SK-N-SH (cell line): ENCODE measurements at regions of chr3 and their contacts with region 1.

Region 1: DNA sequence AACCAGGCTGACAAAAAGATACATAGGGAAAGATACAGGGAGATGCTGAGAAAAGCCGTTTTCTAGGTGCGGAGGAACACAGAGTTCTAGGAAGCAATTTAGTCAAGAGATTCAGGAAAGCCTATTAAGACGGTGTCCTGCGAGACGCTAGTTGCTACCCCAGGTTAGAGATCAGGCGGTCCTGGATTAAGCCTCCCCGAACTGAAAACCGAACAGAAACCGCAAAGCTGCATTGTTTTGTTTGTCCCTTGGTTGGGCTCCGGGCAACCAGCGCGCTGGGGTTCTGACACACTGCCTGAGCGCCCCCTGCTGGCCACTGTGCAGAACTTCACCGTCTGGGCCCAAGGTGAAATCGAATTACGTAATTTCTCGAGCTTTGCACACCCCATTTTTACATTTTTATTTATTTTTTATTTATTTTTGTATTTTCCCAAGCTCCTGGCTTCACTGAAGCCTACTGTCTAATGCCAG is 37.3 kb upstream of the NDUFB4 start:
- DNase-seq: peak; percentile 78
- H3K4me3 ChIP-seq: peak overlapping the region; percentile 59 to 61
- H3K27ac ChIP-seq: peak overlapping the region; percentile 81 to 94
- H3K4me1 ChIP-seq: peaks cover 20 to 21% of the 10 kb centered on the region in 2 experiments
- H3K27me3 ChIP-seq: no peaks in the 10 kb centered on the region
- CTCF ChIP-seq: peak; percentile 97
- EP300 ChIP-seq: no peak
- RAD21 ChIP-seq: peak; percentile 91

Region 2: DNA sequence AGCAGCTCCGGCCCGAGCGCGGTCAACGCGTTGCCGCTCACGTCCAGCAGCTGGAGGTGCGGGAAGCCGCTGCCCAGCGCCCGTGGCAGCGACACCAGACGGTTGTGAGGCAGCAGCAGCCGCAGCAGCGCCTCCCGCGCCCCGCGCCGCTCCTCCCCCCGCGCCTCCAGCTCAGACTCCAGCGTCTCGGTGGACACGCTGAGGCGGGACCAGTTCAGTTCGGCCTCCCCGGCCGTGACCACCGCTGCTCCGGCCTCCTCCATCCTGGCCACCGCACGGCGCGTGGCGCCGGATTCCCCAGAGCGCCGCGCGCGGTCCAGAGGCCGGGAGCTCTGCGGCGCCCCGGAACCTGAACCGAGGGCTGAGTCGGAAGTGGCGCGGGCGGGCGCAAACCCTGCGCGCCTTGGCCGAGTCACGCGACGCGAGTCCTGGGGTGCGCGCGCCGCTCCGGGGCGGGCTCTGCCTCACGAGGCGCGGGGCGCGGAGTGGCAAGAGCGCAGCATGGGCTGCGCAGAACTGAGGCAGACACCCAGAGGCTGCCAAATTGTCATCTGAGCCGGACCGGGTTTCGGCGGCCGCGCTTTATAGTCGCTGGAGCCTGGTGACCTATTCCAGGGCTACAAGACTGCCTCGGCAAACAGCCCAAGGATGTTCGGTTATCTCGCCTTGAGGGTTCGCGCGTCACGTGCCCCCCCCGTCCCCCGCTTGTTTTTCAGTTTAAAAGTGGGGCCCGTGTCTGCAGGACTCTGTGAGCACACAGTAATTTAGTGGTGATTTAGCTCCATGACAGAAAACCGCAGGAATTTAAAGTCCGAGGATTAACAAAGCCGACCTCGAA is 209.6 kb before region 1 on chr3 and contains the start of gene LRRC58:
- CTCF ChIA-PET with region 1: interaction called, 10 read pairs
- POLR2A ChIA-PET with region 1: no interaction called
- DNase-seq: peak; percentile 95
- H3K4me3 ChIP-seq: peak within 1 kb of the TSS; percentile 90 to 94
- H3K27ac ChIP-seq: peak within 1 kb of the TSS; percentile 87 to 96
- H3K4me1 ChIP-seq: peaks cover 6 to 12% of the 10 kb centered on the region in 2 experiments; a peak in 3 of 4 replicates
- H3K27me3 ChIP-seq: no peaks in the 10 kb centered on the region
- CTCF ChIP-seq: peak; percentile 31
- EP300 ChIP-seq: peak; percentile 19 to 39; a peak in 2 of 4 replicates
- RAD21 ChIP-seq: no peak; the same call in 1 of the 2 replicates
- polyA plus RNA-seq, gene LRRC58: 5.8 and 8.1 TPM in 2 replicates

Region 3: DNA sequence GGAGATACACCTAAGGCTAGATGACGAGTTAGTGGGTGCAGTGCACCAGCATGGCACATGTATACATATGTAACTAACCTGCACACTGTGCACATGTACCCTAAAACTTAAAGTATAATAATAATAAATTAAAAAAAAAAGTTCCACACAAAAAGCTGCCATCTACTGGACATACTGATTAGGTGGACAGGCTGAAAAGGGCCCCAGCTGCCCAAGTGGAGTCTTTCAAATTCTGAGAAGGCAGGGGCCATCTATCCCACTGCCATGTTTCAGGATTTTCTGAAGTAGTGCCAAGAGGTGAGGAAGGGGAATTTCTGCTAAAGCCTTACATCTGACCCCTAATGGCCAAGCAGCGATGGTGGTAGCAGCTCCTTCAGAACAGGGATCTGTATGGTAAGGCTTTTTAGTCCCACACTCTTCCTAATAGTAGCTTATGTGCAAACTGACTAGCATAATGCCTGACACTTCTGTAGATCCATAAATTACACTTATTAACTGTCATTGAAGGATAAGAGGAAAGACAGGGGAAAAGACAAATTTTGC is 115.8 kb before region 1 on chr3:
- CTCF ChIA-PET with region 1: interaction called, 10 read pairs
- POLR2A ChIA-PET with region 1: no interaction called
- DNase-seq: no peak
- H3K4me3 ChIP-seq: no peak overlapping the region
- H3K27ac ChIP-seq: peak overlapping the region; percentile 13 to 43; a peak in 2 of 4 replicates
- H3K4me1 ChIP-seq: peaks cover 22 to 55% of the 10 kb centered on the region in 2 experiments
- H3K27me3 ChIP-seq: no peaks in the 10 kb centered on the region
- CTCF ChIP-seq: peak; percentile 57
- EP300 ChIP-seq: no peak
- RAD21 ChIP-seq: no peak

Region 4: DNA sequence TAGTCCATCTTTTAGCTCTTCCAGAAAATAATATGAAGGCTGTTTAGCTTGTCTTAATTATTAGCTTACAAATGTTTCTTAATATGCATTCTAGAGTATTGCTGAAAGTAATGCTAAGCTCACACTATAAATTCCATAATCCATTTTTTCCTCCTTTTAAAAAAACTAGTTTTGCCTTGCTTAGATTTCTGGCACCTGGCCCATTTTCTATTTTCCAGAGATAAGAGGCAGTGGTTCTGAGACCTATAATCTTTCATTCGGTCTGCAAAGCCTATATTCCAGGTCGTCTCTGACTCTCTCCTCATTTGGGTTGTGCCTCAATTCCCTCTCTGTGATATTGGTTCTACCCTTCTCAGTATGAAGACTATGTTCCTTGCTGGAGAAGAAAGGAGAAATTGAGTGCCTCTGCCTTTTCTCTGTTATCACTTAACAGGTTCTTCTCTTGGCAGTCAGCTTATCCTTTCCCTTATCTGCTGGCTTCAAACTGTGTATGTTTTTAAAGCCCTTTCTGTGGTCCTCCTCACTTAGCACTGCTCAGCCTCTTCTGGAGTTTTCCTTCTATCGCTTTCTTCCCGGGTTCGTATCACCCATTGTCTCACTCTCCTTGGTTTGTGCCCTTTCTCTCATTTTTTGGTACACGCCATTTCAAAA is 42.8 kb before region 1 on chr3:
- CTCF ChIA-PET with region 1: interaction called, 12 read pairs
- POLR2A ChIA-PET with region 1: no interaction called
- DNase-seq: peak; percentile 12
- H3K4me3 ChIP-seq: no peak overlapping the region
- H3K27ac ChIP-seq: no peak overlapping the region
- H3K4me1 ChIP-seq: peaks cover 0 to 5% of the 10 kb centered on the region in 2 experiments; a peak in 2 of 4 replicates
- H3K27me3 ChIP-seq: no peaks in the 10 kb centered on the region
- CTCF ChIP-seq: no peak
- EP300 ChIP-seq: no peak
- RAD21 ChIP-seq: no peak

Region 5: DNA sequence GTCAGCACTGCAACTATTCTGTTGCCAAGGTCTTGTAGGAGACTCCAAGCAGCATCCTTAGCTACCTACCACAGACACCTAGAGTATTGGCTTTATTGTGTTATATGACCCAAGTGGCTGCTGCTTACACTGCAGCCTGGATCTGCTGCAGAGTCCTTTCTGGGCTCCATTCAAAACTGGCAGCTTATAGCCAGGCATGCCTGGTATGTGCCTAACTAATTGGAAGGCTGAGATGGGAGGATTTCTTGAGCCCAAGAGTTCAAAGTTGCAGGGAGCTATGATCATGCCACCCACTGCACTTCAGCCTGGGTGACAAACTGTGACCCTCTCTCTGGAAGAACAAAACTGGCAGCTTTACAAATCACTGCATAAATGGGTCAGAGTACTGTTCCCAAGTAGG is 46.0 kb after region 1 on chr3:
- CTCF ChIA-PET with region 1: interaction called, 16 read pairs
- POLR2A ChIA-PET with region 1: no interaction called
- DNase-seq: no peak
- H3K4me3 ChIP-seq: no peak overlapping the region
- H3K27ac ChIP-seq: peak overlapping the region in 1 of 2 experiments; percentile 25; a peak in 1 of 4 replicates
- H3K4me1 ChIP-seq: peaks cover 1 to 32% of the 10 kb centered on the region in 2 experiments; a peak in 3 of 4 replicates
- H3K27me3 ChIP-seq: no peaks in the 10 kb centered on the region
- CTCF ChIP-seq: no peak
- EP300 ChIP-seq: no peak
- RAD21 ChIP-seq: no peak